ENCODE measurements at regions of chr10 and their contacts with region 1.

Region 1: GRCh38 chr10:79374312-79375191 is 27.3 kb downstream of the PPIF start:
- DNase-seq: peak; percentile 87
- ATAC-seq: peak; percentile 81 to 82
- H3K4me3 ChIP-seq: no peak overlapping the region
- H3K27ac ChIP-seq: no peak overlapping the region
- H3K4me1 ChIP-seq: peaks cover 8% of the 10 kb centered on the region
- H3K27me3 ChIP-seq: no peaks in the 10 kb centered on the region
- CTCF ChIP-seq: peak; percentile 99

Region 2: GRCh38 chr10:79444199-79445119 is 69.9 kb after region 1 on chr10:
- intact Hi-C with region 1: no loop called
- DNase-seq: peak; percentile 77
- ATAC-seq: peak; percentile 64 to 66
- H3K4me3 ChIP-seq: peak overlapping the region; percentile 96
- H3K27ac ChIP-seq: peak overlapping the region; percentile 92
- H3K4me1 ChIP-seq: peaks cover 30% of the 10 kb centered on the region
- H3K27me3 ChIP-seq: no peaks in the 10 kb centered on the region
- CTCF ChIP-seq: no peak

Region 3: GRCh38 chr10:79463578-79464496 is 89.3 kb after region 1 on chr10:
- intact Hi-C with region 1: loop called (anchors 10 kb)
- DNase-seq: no peak
- ATAC-seq: peak in 1 of 2 donors; percentile 29
- H3K4me3 ChIP-seq: no peak overlapping the region
- H3K27ac ChIP-seq: no peak overlapping the region
- H3K4me1 ChIP-seq: peaks cover 19% of the 10 kb centered on the region
- H3K27me3 ChIP-seq: no peaks in the 10 kb centered on the region
- CTCF ChIP-seq: no peak

Measured in lower lobe of right lung (tissue), 2 donors.